Right ventricle myocardium superior (tissue), 1 donor: ENCODE measurements at regions of chr3 and their contacts with region 1.

Region 1: GRCh38 chr3:56801662-56802377 is at the start of gene ARHGEF3:
- DNase-seq: peak; percentile 91
- ATAC-seq: peak; percentile 96
- total RNA-seq, gene ARHGEF3: 15.0 TPM

Region 2: DNA sequence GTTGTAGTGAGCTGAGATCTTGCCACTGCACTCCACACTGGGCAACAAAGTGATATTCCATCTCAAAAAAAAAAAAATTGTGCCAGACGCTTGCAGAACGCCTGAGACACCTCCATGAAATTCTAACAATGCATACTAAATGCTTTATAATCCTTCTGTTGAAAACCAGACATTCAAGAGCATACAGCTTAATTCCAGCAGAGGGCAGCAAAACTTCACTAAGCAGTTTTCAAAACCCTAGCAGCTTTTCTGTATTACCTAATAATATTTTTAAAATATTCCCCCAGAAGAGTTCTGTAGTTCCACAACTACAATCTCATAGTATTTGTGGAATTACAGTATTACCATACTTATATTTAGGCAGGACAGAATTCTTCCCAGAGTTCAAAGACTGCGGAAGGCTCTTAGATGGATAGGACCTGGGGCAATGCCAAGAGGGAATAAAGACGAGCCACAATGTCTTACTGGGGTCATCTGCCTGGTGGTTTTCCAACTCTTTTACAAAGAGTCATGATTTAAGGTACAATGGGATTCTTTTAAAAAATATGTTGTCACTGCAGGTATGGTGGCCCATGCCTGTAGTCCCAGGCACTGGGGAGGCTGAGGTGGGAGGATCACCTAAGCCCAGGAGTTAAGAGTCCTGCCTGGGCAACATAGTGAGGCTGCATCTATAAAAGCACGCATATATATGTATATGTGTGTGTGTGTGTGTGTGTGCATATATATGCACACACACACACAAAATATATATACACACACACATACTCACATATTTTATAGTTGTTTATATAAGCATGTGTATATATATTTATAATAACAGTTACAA is 99.1 kb before region 1 on chr3:
- intact Hi-C with region 1: loop called (anchors 5 kb)
- DNase-seq: no peak
- ATAC-seq: peak; percentile 79

Region 3: GRCh38 chr3:56915966-56916586 is 114.3 kb after region 1 on chr3:
- intact Hi-C with region 1: loop called (anchors 5 kb)
- DNase-seq: peak; percentile 57
- ATAC-seq: peak; percentile 71

Region 4: DNA sequence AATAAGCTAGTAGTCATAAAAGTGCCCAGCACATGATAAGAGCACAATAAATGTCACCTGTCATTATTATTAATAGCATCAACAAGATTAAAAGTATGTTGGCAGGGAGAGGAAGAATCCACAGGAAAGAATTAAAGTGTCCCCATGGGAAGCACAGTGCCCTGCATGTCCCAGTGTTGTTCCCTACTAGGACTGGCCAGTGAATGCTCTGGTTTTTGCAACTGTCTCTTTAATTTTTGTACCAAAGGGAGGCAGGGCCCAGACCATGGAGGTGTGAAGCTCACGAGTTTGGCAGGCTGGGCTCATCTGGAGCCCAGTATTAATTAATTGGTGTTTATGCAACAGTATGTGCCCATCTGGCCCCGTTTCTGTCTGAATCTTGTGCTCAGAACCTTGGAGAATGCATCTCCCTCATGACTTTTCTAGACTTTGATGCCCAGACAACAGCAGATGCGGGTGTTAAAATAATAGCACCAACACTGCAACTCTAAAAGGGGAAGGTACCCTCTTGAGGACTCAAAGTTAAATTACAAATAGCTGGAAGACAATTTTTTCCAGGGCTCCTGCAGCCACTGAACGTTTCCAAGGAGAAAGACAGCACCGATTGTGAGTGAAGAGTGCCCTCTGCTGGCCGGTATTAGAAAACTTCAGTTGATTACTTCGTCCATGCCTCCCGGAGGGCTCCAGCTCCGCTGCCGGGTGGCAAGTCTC is 186.8 kb after region 1 on chr3:
- intact Hi-C with region 1: loop called (anchors 5 kb)
- DNase-seq: peak; percentile 73
- ATAC-seq: peak; percentile 91